ENCODE measurements at regions of chr15 and their contacts with region 1.

Region 1: DNA sequence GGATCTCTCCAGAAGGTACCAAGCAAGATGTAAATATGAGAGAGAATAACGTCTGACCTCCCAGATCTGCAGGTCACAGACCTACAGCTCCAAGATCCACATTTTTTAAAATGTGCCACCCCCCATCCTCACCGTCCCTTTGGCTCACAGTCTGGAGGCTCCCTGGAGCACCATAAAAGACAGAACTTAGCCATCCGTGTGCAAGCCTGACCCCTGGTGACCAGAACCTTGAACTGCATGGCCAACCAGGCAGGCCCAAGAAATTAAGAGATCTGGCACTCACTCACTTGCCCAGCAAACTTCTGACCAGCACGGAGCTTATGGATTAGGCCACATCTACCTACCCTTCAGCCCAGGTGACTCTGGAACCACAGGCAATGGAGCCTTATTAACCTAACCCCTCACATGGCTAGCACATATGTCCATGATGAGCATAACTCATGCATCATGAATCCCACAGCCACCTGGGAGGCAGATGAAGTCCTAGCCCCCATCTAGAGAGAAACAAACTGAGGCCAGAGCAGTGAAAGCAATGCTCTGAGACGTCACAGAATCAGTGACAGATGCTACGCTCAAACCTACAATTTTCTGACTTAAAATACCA is 275.3 kb downstream of the UACA start:
- DNase-seq: peak; percentile 42 to 79 (median 62)
- ATAC-seq: peak; percentile 36
- H3K4me3 ChIP-seq: no peak overlapping the region
- H3K4me3 Mint-ChIP-seq: peak overlapping the region in 3 of 10 donors; percentile 13 to 36 (median 33)
- H3K27ac ChIP-seq: no peak overlapping the region
- H3K27ac Mint-ChIP-seq: peak overlapping the region in 2 of 9 donors; percentile 36 to 84
- H3K4me1 ChIP-seq: peaks cover 42 to 46% of the 10 kb centered on the region in 2 donors
- H3K4me1 Mint-ChIP-seq: peaks cover 45 to 86% (median 61%) of the 10 kb centered on the region in 7 donors
- H3K27me3 ChIP-seq: no peaks in the 10 kb centered on the region
- H3K27me3 Mint-ChIP-seq: peaks cover 0 to 37% (median 6%) of the 10 kb centered on the region in 5 donors

Region 2: GRCh38 chr15:69475769-69476358 is 1012.2 kb before region 1 on chr15:
- CTCF ChIA-PET with region 1: interaction called, 5 read pairs
- POLR2A ChIA-PET with region 1: no interaction called
- intact Hi-C with region 1: loop called (anchors 1 kb)
- DNase-seq: peak; percentile 39 to 77 (median 63)
- ATAC-seq: peak; percentile 90
- H3K4me3 ChIP-seq: no peak overlapping the region
- H3K4me3 Mint-ChIP-seq: no peak overlapping the region
- H3K27ac ChIP-seq: no peak overlapping the region
- H3K27ac Mint-ChIP-seq: no peak overlapping the region
- H3K4me1 ChIP-seq: no peaks in the 10 kb centered on the region
- H3K4me1 Mint-ChIP-seq: peaks cover 0 to 5% (median 0%) of the 10 kb centered on the region in 7 donors
- H3K27me3 ChIP-seq: no peaks in the 10 kb centered on the region
- H3K27me3 Mint-ChIP-seq: peaks cover 0 to 29% (median 0%) of the 10 kb centered on the region in 5 donors

Region 3: DNA sequence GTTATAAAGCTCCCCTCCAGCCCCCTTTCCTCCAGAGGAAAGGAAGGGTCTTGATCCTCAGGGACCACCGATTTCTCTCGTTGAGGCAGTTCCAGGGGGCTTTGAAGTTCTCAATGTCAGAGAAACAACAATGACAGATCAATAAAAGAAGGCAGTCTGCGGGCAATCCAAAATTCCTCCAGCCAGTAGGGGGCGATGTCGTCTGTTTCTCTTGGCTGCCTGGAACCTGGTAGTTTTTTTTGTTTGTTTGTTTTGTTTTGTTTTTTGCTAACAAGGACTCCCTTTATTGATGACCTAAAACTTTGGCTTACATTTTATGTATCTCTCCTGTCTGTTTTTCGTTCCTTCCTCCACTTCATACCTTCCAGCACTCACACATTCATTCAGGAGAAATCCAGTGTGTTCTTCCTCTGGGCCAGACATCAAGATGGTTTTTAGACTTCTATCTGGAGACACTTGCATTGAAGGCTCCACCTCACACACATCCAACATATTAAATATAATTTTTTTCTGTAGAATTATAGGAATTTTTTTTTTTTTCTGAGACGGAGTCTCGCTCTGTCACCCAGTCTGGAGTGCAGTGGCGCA is 758.8 kb before region 1 on chr15:
- CTCF ChIA-PET with region 1: interaction called, 3 read pairs
- POLR2A ChIA-PET with region 1: no interaction called
- intact Hi-C with region 1: loop called in 1 of 2 experiments (anchors 1 kb)
- DNase-seq: peak; percentile 38 to 79 (median 61)
- ATAC-seq: peak; percentile 53
- H3K4me3 ChIP-seq: no peak overlapping the region
- H3K4me3 Mint-ChIP-seq: no peak overlapping the region
- H3K27ac ChIP-seq: no peak overlapping the region
- H3K27ac Mint-ChIP-seq: peak overlapping the region in 3 of 9 donors; percentile 5 to 22 (median 19)
- H3K4me1 ChIP-seq: peaks cover 0 to 12% of the 10 kb centered on the region in 2 donors
- H3K4me1 Mint-ChIP-seq: peaks cover 13 to 64% (median 23%) of the 10 kb centered on the region in 7 donors
- H3K27me3 ChIP-seq: no peaks in the 10 kb centered on the region
- H3K27me3 Mint-ChIP-seq: peaks cover 0 to 30% (median 0%) of the 10 kb centered on the region in 5 donors

Region 4: GRCh38 chr15:70083946-70084345 is 404.2 kb before region 1 on chr15:
- CTCF ChIA-PET with region 1: no interaction called
- POLR2A ChIA-PET with region 1: no interaction called
- intact Hi-C with region 1: no loop called
- DNase-seq: no peak
- ATAC-seq: no peak
- H3K4me3 ChIP-seq: no peak overlapping the region
- H3K4me3 Mint-ChIP-seq: peak overlapping the region in 2 of 10 donors; percentile 11 to 38
- H3K27ac ChIP-seq: no peak overlapping the region
- H3K27ac Mint-ChIP-seq: no peak overlapping the region
- H3K4me1 ChIP-seq: peaks cover 12 to 17% of the 10 kb centered on the region in 2 donors
- H3K4me1 Mint-ChIP-seq: peaks cover 38 to 87% (median 76%) of the 10 kb centered on the region in 7 donors
- H3K27me3 ChIP-seq: no peaks in the 10 kb centered on the region
- H3K27me3 Mint-ChIP-seq: no peaks in the 10 kb centered on the region

Region 5: DNA sequence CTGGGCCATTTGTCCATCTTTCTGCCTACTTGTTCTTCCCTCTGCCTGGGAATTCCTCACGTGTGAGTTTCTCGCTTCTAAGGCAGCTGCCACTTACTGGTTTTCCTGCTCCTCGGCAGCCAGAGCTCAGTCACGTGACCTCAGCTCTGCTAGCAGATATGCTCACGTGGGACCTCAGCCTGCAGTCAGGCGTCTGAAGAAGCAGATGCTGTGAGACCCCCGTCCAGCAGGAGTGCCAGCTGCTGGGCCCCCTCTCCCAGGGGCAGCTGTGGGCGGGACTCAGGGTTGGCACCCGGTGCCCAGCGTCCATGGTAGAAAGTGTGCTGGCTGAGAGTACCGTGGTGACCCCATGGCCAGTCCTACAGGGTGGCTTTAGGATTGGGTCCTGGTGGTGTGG is 229.1 kb before region 1 on chr15:
- CTCF ChIA-PET with region 1: no interaction called
- POLR2A ChIA-PET with region 1: no interaction called
- intact Hi-C with region 1: loop called in 1 of 2 experiments (anchors 2 kb)
- DNase-seq: peak in 8 of 9 donors; percentile 35 to 61 (median 54)
- ATAC-seq: peak; percentile 58
- H3K4me3 ChIP-seq: peak overlapping the region; percentile 40
- H3K4me3 Mint-ChIP-seq: peak overlapping the region; percentile 79 to 96 (median 84)
- H3K27ac ChIP-seq: peak overlapping the region; percentile 56
- H3K27ac Mint-ChIP-seq: peak overlapping the region; percentile 76 to 95 (median 92)
- H3K4me1 ChIP-seq: peaks cover 29 to 40% of the 10 kb centered on the region in 2 donors
- H3K4me1 Mint-ChIP-seq: peaks cover 46 to 69% (median 51%) of the 10 kb centered on the region in 7 donors
- H3K27me3 ChIP-seq: no peaks in the 10 kb centered on the region
- H3K27me3 Mint-ChIP-seq: peaks cover 0 to 34% (median 0%) of the 10 kb centered on the region in 5 donors

Region 6: GRCh38 chr15:70504299-70504951 is 16.3 kb after region 1 on chr15:
- CTCF ChIA-PET with region 1: interaction called, 10 read pairs
- POLR2A ChIA-PET with region 1: interaction called, 39 read pairs
- intact Hi-C with region 1: loop called in 1 of 2 experiments (anchors 1 kb)
- DNase-seq: peak in 1 of 9 donors; percentile 62
- ATAC-seq: peak; percentile 39
- H3K4me3 ChIP-seq: no peak overlapping the region
- H3K4me3 Mint-ChIP-seq: peak overlapping the region in 9 of 10 donors; percentile 34 to 77 (median 69)
- H3K27ac ChIP-seq: no peak overlapping the region
- H3K27ac Mint-ChIP-seq: peak overlapping the region in 7 of 9 donors; percentile 22 to 79 (median 59)
- H3K4me1 ChIP-seq: peaks cover 33 to 39% of the 10 kb centered on the region in 2 donors
- H3K4me1 Mint-ChIP-seq: peaks cover 45 to 88% (median 70%) of the 10 kb centered on the region in 7 donors
- H3K27me3 ChIP-seq: no peaks in the 10 kb centered on the region
- H3K27me3 Mint-ChIP-seq: peaks cover 0 to 10% (median 0%) of the 10 kb centered on the region in 5 donors

Region 7: DNA sequence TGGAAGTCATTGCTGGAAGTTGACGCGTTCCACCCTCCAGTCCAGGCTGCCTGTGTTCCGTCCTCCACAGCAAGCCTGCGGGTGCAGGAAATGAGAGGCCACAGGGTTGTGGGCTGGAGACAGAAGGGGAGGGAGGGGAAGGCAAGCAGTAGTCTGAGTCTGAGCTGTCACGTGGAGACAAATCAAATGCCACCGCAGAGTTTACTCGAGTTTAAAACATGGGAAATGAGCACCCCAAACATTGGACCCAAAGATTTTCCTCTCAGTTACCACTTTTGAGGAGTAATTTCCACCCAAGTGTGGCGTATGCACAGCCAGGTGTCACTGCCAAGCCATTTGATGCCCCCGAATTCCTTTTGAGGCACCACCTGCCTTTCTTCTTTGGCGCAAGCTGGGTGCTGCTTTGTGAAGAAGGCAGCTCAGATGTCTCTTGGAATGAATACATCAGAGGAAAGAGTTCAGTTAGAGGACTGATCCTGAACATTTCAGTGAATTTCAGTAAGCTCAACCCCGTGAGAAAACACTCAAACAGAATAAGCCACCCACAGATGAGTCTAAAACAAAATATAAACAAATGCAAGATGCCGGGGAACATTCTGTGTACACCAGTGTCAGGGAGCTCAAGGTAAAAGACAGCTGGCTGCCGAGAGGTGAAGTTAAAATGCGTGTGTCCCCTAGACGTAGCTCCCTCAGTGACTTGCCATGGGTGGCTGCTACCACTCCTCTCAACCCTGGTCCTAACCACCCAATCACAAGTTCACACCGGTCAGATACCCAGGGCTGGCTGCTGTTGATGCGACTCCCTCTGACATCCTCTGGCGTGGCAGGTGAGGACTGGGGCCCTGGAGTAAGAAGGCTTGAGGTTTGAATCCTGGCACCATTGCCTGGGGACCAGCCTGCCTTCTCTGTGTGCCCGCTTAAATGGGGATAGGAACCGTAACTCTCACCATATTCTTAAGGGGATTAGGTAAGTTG is 71.4 kb after region 1 on chr15:
- CTCF ChIA-PET with region 1: interaction called, 4 read pairs
- POLR2A ChIA-PET with region 1: interaction called, 3 read pairs
- intact Hi-C with region 1: loop called (anchors 1 to 2 kb)
- DNase-seq: peak; percentile 35 to 83 (median 80)
- ATAC-seq: peak; percentile 88
- H3K4me3 ChIP-seq: peak overlapping the region; percentile 69
- H3K4me3 Mint-ChIP-seq: peak overlapping the region in 1 of 10 donors; percentile 11
- H3K27ac ChIP-seq: peak overlapping the region; percentile 62
- H3K27ac Mint-ChIP-seq: no peak overlapping the region
- H3K4me1 ChIP-seq: peaks cover 31 to 66% of the 10 kb centered on the region in 2 donors
- H3K4me1 Mint-ChIP-seq: peaks cover 4 to 24% (median 14%) of the 10 kb centered on the region in 7 donors
- H3K27me3 ChIP-seq: no peaks in the 10 kb centered on the region
- H3K27me3 Mint-ChIP-seq: peaks cover 0 to 29% (median 0%) of the 10 kb centered on the region in 5 donors

Measured in naive thymus-derived CD4-positive, alpha-beta T cell (primary cell).